ENCODE measurements at regions of chr6 and their contacts with region 1.

Region 1: GRCh38 chr6:43951063-43951755 is 176.0 kb downstream of the MRPL14 start:
- DNase-seq: peak; percentile 83

Region 2: DNA sequence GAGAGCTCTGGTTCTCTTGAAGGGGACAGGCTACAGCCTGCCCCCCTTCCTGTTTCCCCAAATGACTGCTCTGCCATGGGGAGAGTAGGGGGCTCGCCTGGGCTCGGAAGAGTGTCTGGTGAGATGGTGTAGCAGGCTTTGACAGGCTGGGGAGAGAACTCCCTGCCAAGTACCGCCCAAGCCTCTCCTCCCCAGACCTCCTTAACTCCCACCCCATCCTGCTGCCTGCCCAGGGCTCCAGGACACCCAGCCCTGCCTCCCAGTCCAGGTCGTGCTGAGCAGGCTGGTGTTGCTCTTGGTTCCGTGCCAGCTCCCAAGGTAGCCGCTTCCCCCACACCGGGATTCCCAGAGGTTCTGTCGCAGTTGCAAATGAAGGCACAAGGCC is 171.4 kb before region 1 on chr6:
- intact Hi-C with region 1: loop called (anchors 10 kb)
- DNase-seq: peak; percentile 73

Region 3: DNA sequence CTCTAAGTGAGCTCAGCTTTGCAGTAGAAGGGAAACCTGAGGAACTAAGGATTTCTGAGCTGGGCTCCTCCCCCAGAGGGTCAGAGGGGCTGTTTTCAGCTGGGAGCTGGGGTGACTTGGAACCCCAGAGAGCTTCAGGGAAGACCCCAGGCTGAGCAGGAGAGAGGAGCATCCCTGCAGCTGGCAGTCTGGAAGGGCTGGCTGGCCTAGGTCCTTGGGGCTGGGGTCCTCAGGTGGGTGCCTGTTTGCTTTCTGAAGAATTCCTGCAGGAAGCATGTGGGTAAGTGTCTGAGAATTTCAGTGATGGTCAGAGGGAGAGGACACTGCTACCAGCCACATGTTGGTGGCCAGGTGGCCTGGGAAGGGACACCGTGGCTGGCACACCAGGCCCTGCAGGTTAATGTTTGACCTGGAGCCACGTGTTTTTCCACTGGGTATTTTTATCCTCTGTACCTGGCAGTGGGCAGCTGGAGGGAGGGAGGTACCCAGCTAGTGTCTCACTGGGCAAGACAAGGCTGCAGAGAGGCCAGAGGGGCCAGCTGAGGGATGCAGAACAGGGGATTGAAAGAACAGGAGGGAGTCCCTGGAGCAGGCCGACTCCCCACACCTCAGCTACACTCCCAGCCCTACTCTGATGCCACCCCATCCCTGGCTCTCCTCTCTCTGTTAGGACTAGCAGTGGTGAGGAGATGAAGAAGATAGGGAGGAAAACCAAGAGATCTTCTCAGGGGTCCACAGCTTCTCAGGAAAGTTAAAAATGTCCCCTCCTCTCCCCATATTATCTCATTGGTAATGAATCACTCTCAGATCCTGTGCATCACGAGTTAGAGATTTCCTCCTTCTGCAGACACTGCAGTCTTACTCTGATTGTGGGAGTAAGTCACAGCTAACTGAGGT is 37.6 kb before region 1 on chr6:
- intact Hi-C with region 1: loop called in 1 of 2 experiments (anchors 2 kb)
- DNase-seq: no peak